GM12878 (cell line): ENCODE measurements at regions of chr9 and their contacts with region 1.

Region 1: GRCh38 chr9:124040935-124041816 is 29.6 kb downstream of the LHX2 start:
- DNase-seq: no peak
- ATAC-seq: peak; percentile 85
- H3K4me3 ChIP-seq: peak overlapping the region; percentile 28; the same call in 1 of the 2 replicates
- H3K27ac ChIP-seq: no peak overlapping the region
- H3K4me1 ChIP-seq: peaks cover 6% of the 10 kb centered on the region
- H3K27me3 ChIP-seq: peaks cover 2 to 6% of the 10 kb centered on the region in 2 experiments
- CTCF ChIP-seq: peak; percentile 87 to 95 (median 90)
- EP300 ChIP-seq: no peak
- POLR2A ChIP-seq: no peak
- RAD21 ChIP-seq: peak; percentile 85

Region 2: GRCh38 chr9:123536455-123536868 is 504.7 kb before region 1 on chr9:
- CTCF ChIA-PET with region 1: interaction called, 124 read pairs
- POLR2A ChIA-PET with region 1: interaction called, 3 read pairs
- RAD21 ChIA-PET with region 1: interaction called, 39 read pairs
- SMC1A ChIA-PET with region 1: interaction called, 68 read pairs
- in situ Hi-C with region 1: no loop called
- intact Hi-C with region 1: no loop called
- DNase-seq: peak; percentile 43
- ATAC-seq: peak; percentile 92
- H3K4me3 ChIP-seq: peak overlapping the region; percentile 37; the same call in 1 of the 2 replicates
- H3K27ac ChIP-seq: peak overlapping the region; percentile 2; the same call in 1 of the 2 replicates
- H3K4me1 ChIP-seq: peaks cover 11% of the 10 kb centered on the region
- H3K27me3 ChIP-seq: no peaks in the 10 kb centered on the region
- CTCF ChIP-seq: no peak
- EP300 ChIP-seq: no peak
- POLR2A ChIP-seq: no peak
- RAD21 ChIP-seq: no peak

Region 3: DNA sequence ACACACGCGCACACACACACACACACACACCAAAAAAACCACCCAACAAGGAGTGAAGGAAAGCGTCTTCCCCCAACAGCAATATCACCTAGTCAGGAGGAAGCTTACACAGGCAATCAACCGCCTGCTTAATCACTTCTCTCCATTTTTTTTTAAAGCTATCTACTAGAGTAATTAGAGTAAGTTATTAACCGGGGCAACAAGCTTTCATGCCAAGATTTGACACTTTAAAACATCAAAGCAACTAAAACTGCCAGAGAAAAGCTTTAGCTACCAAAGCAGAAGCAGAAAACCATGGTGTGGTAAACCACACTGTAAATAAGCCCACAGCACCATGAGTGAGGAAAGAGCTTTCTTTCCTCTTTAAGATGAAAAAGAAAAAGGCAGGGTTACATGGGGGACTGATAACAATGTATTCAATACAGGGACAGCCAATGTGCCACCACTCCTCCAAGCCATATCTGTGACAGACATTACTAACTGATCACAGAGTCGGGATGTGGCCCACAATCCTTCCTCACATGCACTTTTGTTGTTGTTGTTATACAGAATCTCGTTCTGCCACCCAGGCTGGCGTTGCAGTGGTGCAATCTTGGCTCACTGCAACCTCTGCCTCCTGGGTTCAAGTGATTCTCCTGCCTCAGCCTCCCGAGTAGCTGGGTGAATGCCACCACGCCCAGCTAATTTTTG is 403.1 kb before region 1 on chr9:
- CTCF ChIA-PET with region 1: interaction called, 10 read pairs
- POLR2A ChIA-PET with region 1: no interaction called
- RAD21 ChIA-PET with region 1: interaction called, 7 read pairs
- SMC1A ChIA-PET with region 1: interaction called, 7 read pairs
- in situ Hi-C with region 1: no loop called
- intact Hi-C with region 1: no loop called
- DNase-seq: peak; percentile 75
- ATAC-seq: peak; percentile 89
- H3K4me3 ChIP-seq: no peak overlapping the region
- H3K27ac ChIP-seq: no peak overlapping the region
- H3K4me1 ChIP-seq: peaks cover 7% of the 10 kb centered on the region
- H3K27me3 ChIP-seq: no peaks in the 10 kb centered on the region
- CTCF ChIP-seq: no peak
- EP300 ChIP-seq: peak; percentile 65 to 79; a peak in 3 of 4 replicates
- POLR2A ChIP-seq: no peak
- RAD21 ChIP-seq: no peak

Region 4: DNA sequence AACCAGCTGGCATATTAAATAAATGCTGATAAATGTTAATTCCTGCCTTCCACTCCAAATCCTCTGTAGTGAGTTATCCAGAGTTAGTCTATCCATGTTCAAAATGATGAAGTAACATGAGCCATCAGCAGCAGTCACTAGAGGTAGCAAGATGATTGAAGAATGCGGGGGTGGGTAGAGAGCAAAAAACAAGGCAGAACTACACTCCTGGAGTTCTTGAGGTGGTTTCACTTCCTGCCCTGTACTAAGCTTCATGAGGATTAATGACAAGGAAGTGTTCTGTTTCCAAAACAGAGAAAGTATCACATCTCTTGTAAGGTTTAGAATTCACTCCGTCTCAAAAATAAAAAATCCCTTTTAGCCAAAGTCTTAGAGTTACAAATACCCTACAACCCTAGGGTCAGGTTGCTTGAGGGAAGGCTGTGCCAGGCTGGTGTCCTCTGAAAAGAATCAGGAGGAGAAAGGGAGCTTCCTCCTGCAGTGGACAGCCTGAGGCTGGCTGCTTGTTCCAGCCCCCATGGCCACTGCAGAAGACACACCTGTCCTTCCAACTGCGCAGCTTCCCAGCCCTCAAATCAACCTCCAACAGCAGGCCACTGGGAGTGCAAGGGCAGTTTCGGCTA is 291.5 kb before region 1 on chr9:
- CTCF ChIA-PET with region 1: interaction called, 23 read pairs
- POLR2A ChIA-PET with region 1: no interaction called
- RAD21 ChIA-PET with region 1: interaction called, 4 read pairs
- SMC1A ChIA-PET with region 1: interaction called, 4 read pairs
- in situ Hi-C with region 1: no loop called
- intact Hi-C with region 1: no loop called
- DNase-seq: peak; percentile 40
- ATAC-seq: peak; percentile 90
- H3K4me3 ChIP-seq: no peak overlapping the region
- H3K27ac ChIP-seq: peak overlapping the region; percentile 60
- H3K4me1 ChIP-seq: peaks cover 21% of the 10 kb centered on the region
- H3K27me3 ChIP-seq: no peaks in the 10 kb centered on the region
- CTCF ChIP-seq: peak in 1 of 3 experiments; percentile 26; a peak in 2 of 6 replicates
- EP300 ChIP-seq: 0 out of 4 replicates have a peak, but pooled peaks of 1 of the 2 experiments have one; percentile 29
- POLR2A ChIP-seq: no peak
- RAD21 ChIP-seq: peak; percentile 52

Region 5: GRCh38 chr9:123940721-123941523 is 100.3 kb before region 1 on chr9:
- CTCF ChIA-PET with region 1: interaction called, 6 read pairs
- POLR2A ChIA-PET with region 1: no interaction called
- RAD21 ChIA-PET with region 1: interaction called, 11 read pairs
- SMC1A ChIA-PET with region 1: interaction called, 30 read pairs
- in situ Hi-C with region 1: no loop called
- intact Hi-C with region 1: no loop called
- DNase-seq: peak; percentile 77
- ATAC-seq: peak; percentile 95
- H3K4me3 ChIP-seq: no peak overlapping the region
- H3K27ac ChIP-seq: no peak overlapping the region
- H3K4me1 ChIP-seq: no peaks in the 10 kb centered on the region
- H3K27me3 ChIP-seq: no peaks in the 10 kb centered on the region
- CTCF ChIP-seq: no peak
- EP300 ChIP-seq: peak; percentile 64 to 82; a peak in 2 of 4 replicates
- POLR2A ChIP-seq: no peak
- RAD21 ChIP-seq: no peak

Region 6: GRCh38 chr9:123997665-123998277 is 43.4 kb before region 1 on chr9:
- CTCF ChIA-PET with region 1: interaction called, 45 read pairs
- POLR2A ChIA-PET with region 1: interaction called, 4 read pairs
- RAD21 ChIA-PET with region 1: interaction called, 52 read pairs
- SMC1A ChIA-PET with region 1: interaction called, 55 read pairs
- in situ Hi-C with region 1: no loop called
- intact Hi-C with region 1: no loop called
- DNase-seq: peak; percentile 81
- ATAC-seq: peak; percentile 79
- H3K4me3 ChIP-seq: peak overlapping the region; percentile 50; the same call in 1 of the 2 replicates
- H3K27ac ChIP-seq: peak overlapping the region; percentile 85
- H3K4me1 ChIP-seq: peaks cover 30% of the 10 kb centered on the region
- H3K27me3 ChIP-seq: peaks cover 0 to 25% of the 10 kb centered on the region in 2 experiments; a peak in 1 of 4 replicates
- CTCF ChIP-seq: no peak
- EP300 ChIP-seq: peak; percentile 24 to 61; a peak in 1 of 4 replicates
- POLR2A ChIP-seq: no peak
- RAD21 ChIP-seq: no peak

Region 7: DNA sequence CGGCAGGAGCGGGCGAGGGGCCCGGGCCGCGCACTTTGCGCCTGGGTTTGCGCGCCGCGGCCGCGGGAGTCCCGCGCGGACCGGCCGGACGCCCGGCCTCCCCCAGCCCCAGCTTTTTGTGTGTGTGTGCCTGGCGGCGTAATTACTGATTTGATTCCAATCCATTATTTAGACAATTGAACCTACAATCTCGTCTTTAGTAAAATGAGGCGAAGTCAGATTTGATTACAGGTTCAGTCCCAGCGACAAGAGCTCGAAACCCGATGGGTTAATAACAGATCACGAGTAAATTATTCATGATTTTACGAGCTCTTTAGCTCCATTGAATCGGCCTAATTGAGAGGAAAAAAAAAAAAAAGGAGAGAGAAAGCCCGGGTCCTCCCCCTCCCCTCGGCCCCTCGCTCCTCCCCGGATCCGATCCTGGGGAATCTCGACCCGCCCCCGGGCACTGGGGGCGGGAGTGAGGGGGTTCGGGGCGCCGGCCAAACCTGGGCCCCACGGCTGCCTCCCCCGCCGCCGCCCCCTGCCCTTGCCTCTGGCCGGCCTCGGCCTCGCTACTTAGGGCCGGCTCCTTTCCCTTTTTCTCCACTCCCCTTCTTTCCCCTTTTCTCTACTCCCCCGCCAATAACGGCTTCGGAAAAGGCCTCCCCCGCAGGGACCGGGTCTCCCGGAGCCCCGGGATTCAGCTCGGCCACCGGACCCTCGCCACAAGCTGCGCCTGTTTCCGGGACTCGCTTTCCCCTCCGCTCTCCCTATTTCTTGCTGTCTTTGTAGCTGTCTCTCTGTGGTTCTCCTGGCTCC is 23.0 kb before region 1 on chr9:
- CTCF ChIA-PET with region 1: interaction called, 11 read pairs
- POLR2A ChIA-PET with region 1: no interaction called
- RAD21 ChIA-PET with region 1: interaction called, 17 read pairs
- SMC1A ChIA-PET with region 1: interaction called, 15 read pairs
- in situ Hi-C with region 1: no loop called
- intact Hi-C with region 1: no loop called
- DNase-seq: no peak
- ATAC-seq: no peak
- H3K4me3 ChIP-seq: no peak overlapping the region
- H3K27ac ChIP-seq: no peak overlapping the region
- H3K4me1 ChIP-seq: peaks cover 7% of the 10 kb centered on the region
- H3K27me3 ChIP-seq: peaks cover 0 to 64% of the 10 kb centered on the region in 2 experiments; a peak in 2 of 4 replicates
- CTCF ChIP-seq: no peak
- EP300 ChIP-seq: no peak
- POLR2A ChIP-seq: no peak
- RAD21 ChIP-seq: no peak